Activated CD8-positive, alpha-beta T cell treated with anti-CD3 and anti-CD28 coated beads for 36 hours (primary cell): ENCODE measurements at regions of chr1 and their contacts with region 1.

Region 1: GRCh38 chr1:7752512-7753417 is 18.3 kb upstream of the VAMP3 start:
- DNase-seq: peak; percentile 70
- ATAC-seq: peak; percentile 60
- H3K4me3 Mint-ChIP-seq: peak overlapping the region; percentile 47
- H3K27ac Mint-ChIP-seq: no peak overlapping the region
- H3K4me1 Mint-ChIP-seq: peaks cover 29% of the 10 kb centered on the region
- H3K27me3 Mint-ChIP-seq: peaks cover 10% of the 10 kb centered on the region
- CTCF ChIP-seq: peak; percentile 88

Region 2: DNA sequence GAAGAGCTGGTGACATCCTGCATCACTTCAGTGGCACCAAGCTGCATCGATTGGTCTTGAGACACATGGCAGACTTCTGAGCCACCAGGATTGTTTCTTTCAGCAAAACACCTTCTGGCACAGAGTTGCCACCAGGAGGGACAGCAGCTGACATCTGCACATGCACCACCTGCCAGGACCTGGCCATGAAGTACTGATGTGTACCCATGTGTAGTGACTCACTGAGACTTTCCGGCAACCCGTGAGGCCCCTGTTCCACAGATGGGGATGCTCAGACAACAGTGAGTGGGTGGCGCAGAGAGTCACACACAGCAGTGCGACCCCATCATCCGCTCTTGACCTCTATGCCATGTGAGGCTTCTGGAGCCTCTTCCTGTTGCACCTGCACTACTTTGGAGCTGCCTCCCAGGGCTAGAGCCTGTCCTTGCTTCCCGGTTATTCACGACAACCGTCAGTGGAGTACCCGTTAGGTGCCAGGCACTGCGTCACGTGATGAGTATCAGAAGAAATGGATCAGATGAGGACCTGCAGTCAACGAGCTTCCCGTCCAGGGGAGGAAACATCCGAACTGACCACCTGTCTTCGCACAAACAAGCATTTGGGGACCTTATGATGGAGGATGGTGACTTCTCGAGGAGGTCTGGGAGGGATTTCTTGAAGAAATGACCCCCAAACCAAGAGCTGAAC is 62.1 kb before region 1 on chr1:
- CTCF ChIA-PET with region 1: interaction called, 18 read pairs
- POLR2A ChIA-PET with region 1: interaction called, 3 read pairs
- intact Hi-C with region 1: no loop called
- DNase-seq: no peak
- ATAC-seq: no peak
- H3K4me3 Mint-ChIP-seq: no peak overlapping the region
- H3K27ac Mint-ChIP-seq: no peak overlapping the region
- H3K4me1 Mint-ChIP-seq: no peaks in the 10 kb centered on the region
- H3K27me3 Mint-ChIP-seq: peaks cover 11% of the 10 kb centered on the region
- CTCF ChIP-seq: no peak

Region 3: GRCh38 chr1:7704214-7705047 is 48.3 kb before region 1 on chr1:
- CTCF ChIA-PET with region 1: interaction called, 23 read pairs
- POLR2A ChIA-PET with region 1: no interaction called
- intact Hi-C with region 1: no loop called
- DNase-seq: peak; percentile 92
- ATAC-seq: peak; percentile 99
- H3K4me3 Mint-ChIP-seq: peak overlapping the region; percentile 66
- H3K27ac Mint-ChIP-seq: no peak overlapping the region
- H3K4me1 Mint-ChIP-seq: peaks cover 10% of the 10 kb centered on the region
- H3K27me3 Mint-ChIP-seq: peaks cover 50% of the 10 kb centered on the region
- CTCF ChIP-seq: no peak

Region 4: GRCh38 chr1:7726623-7727022 is 26.1 kb before region 1 on chr1:
- CTCF ChIA-PET with region 1: interaction called, 18 read pairs
- POLR2A ChIA-PET with region 1: no interaction called
- intact Hi-C with region 1: no loop called
- DNase-seq: no peak
- ATAC-seq: no peak
- H3K4me3 Mint-ChIP-seq: no peak overlapping the region
- H3K27ac Mint-ChIP-seq: no peak overlapping the region
- H3K4me1 Mint-ChIP-seq: peaks cover 2% of the 10 kb centered on the region
- H3K27me3 Mint-ChIP-seq: peaks cover 7% of the 10 kb centered on the region
- CTCF ChIP-seq: no peak

Region 5: GRCh38 chr1:7768583-7768982 is 15.8 kb after region 1 on chr1:
- CTCF ChIA-PET with region 1: interaction called, 47 read pairs
- POLR2A ChIA-PET with region 1: interaction called, 4 read pairs
- intact Hi-C with region 1: no loop called
- DNase-seq: no peak
- ATAC-seq: no peak
- H3K4me3 Mint-ChIP-seq: no peak overlapping the region
- H3K27ac Mint-ChIP-seq: no peak overlapping the region
- H3K4me1 Mint-ChIP-seq: peaks cover 20% of the 10 kb centered on the region
- H3K27me3 Mint-ChIP-seq: peaks cover 10% of the 10 kb centered on the region
- CTCF ChIP-seq: no peak

Region 6: DNA sequence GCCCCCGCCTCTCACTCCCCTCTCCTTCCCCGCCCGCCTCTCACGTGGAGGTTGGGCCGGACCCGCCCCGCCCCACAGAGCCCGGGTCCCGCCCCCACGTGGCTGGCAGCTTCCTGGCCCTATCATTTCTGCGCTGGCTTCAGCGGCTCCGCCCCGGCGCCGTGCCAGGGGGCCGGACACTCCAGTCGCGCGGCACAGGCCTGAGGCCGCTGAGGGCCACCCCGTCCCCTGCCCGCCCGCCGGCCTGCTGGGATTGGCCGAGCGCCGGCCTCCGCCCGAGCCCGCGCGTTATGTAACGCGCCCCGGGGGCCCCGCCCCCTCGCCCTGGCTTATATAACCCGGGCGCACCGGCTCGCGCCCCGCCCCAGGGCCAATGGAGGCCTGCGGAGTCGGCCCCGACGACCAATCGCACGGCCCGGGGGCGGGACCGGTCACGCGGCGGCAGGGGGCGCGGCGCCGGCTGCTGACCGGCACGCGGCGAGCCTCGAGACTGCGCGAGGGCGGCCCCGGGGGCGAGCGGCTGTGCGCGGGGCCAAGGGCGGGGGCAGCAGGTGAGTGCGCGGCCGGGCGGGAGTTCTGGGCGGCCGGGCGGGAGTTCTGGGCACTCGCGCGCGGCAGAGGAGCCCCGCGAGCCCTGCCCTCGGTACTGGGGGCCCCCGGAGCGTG is 31.2 kb after region 1 on chr1 and contains the start of gene PER3:
- CTCF ChIA-PET with region 1: interaction called, 10 read pairs
- POLR2A ChIA-PET with region 1: no interaction called
- intact Hi-C with region 1: no loop called
- DNase-seq: peak; percentile 89
- ATAC-seq: peak; percentile 96
- H3K4me3 Mint-ChIP-seq: peak within 1 kb of the TSS; percentile 68
- H3K27ac Mint-ChIP-seq: no peak within 1 kb of the TSS
- H3K4me1 Mint-ChIP-seq: peaks cover 24% of the 10 kb centered on the region
- H3K27me3 Mint-ChIP-seq: no peaks in the 10 kb centered on the region
- CTCF ChIP-seq: no peak
- total RNA-seq, gene PER3: 2.1 to 2.4 TPM

Region 7: DNA sequence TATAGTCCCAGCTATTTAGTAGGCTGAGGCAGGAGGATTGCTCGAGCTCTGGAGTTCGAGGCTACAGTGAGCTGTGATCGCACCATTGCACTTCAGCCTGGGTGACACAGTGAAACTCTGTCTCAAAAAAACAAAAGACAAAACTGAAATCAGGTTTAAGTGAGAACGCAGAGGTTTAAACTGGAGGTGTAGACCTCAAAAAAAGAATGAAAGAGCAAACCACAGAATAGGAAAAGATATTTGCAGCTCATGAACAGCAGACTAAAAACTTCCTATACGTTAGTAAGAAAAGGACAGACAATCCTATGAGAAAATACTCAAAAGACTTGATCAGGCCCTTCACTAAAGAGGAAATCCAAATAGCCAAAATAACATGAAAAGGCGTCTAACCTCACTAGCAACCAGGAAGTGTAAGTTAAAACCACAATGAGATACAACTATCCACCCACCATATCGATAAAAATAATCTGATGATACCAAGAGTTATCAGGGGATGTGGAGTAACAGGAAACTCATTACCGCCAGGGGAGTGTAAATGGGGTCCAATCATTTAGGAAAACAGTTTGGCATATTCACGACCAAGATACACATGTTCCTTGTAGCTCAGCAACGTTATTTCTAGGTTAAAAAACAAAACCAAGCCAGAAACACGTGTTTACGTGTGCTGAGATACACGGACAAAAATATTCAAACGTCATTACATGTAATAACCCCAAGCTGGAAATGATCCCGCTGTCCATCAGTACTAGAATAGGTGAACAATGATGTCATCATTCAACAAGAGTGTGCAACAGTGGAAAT is 178.1 kb after region 1 on chr1:
- CTCF ChIA-PET with region 1: no interaction called
- POLR2A ChIA-PET with region 1: no interaction called
- intact Hi-C with region 1: no loop called
- DNase-seq: peak; percentile 57
- ATAC-seq: peak; percentile 73
- H3K4me3 Mint-ChIP-seq: peak overlapping the region; percentile 55
- H3K27ac Mint-ChIP-seq: peak overlapping the region; percentile 93
- H3K4me1 Mint-ChIP-seq: peaks cover 79% of the 10 kb centered on the region
- H3K27me3 Mint-ChIP-seq: no peaks in the 10 kb centered on the region
- CTCF ChIP-seq: no peak